ENCODE measurements at regions of chr7 and their contacts with region 1.

Region 1: GRCh38 chr7:123367484-123368122 is 166.8 kb downstream of the IQUB start:
- H3K4me3 ChIP-seq: no peak overlapping the region
- H3K27ac ChIP-seq: no peak overlapping the region
- H3K4me1 ChIP-seq: no peaks in the 10 kb centered on the region
- CTCF ChIP-seq: 0 out of 2 replicates have a peak, but pooled peaks have one; percentile 10

Region 2: DNA sequence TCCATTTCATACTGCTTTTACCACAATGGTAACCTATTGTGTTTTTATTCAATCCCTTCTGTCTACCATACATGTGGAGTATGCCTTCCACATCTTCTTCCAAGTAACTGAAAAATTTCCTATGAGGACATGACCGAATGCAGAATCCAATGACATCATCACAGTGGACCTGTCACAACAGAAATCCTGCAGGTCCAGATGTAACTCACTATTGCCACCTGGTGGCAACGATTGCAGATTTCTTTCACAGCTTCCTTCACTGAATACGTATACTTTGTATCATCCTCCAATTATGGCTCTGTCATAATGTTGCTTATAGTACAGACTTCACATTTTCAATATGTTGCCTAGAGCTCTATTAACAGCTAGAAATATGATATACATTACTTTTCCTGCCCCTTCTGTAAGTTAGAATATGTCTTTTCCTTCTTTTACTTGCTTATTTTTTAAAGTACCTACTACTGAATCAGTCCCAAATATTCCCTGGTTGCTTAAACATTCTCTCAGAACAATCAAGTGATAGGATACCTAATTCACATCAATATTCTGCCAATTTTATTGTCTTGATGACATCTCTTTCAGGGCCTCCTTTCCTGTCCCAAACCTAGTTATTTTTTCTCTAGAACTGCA is 213.3 kb before region 1 on chr7:
- CTCF ChIA-PET with region 1: interaction called, 13 read pairs
- POLR2A ChIA-PET with region 1: no interaction called
- H3K4me3 ChIP-seq: no peak overlapping the region
- H3K27ac ChIP-seq: no peak overlapping the region
- H3K4me1 ChIP-seq: no peaks in the 10 kb centered on the region
- CTCF ChIP-seq: peak; percentile 19; the same call in 1 of the 2 replicates

Region 3: DNA sequence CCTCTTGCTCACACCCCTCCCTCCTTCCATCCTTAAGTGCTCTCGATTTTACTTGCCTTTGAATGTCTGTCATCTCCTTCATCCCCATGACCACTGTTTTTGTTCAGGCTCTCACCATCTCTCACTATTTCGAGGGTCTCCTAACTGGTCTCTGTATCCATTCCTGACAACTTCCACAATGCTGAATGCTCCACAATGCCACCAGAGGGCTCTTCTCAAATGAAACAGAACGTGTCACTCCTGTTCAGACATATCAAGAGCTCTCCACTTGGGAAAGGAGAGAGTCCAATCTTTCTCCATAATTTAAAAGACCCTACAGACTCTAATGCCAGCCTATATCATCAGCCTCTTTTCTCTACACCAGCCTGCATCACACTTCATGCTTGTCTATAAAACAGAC is 158.8 kb before region 1 on chr7:
- CTCF ChIA-PET with region 1: interaction called, 45 read pairs
- POLR2A ChIA-PET with region 1: no interaction called
- H3K4me3 ChIP-seq: no peak overlapping the region
- H3K27ac ChIP-seq: no peak overlapping the region
- H3K4me1 ChIP-seq: no peaks in the 10 kb centered on the region
- CTCF ChIP-seq: peak; percentile 33; the same call in 1 of the 2 replicates

Region 4: DNA sequence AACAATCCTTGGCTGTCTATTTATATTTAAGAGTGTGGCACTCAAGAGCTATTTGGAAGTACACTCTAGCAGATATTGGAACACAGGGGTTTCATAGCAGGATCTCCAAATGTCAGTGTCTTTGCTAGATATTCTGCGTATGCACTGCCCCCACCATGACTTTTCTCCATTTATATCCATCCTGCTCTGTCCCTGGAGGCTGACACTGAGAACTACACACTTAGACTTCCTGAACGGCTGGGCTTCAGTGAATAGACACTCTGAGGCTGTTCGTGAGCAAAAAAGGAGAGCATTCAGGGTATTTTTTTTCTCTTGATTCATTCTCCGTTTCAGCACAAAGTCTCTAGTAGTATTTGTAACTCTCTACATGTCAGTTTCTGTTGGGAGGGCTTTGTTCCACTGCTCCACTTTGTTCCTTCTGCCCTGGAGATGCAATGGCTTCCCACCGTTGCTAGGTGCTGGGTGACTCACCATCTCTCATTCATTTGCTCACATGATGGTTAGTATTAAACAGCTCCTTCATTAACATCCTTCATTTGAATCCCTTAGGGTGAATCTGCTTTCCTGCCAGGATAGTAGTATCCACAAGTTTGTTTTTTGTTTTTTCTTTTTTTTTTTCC is 11.9 kb before region 1 on chr7:
- CTCF ChIA-PET with region 1: interaction called, 13 read pairs
- POLR2A ChIA-PET with region 1: no interaction called
- H3K4me3 ChIP-seq: peak overlapping the region; percentile 7; the same call in 1 of the 2 replicates
- H3K27ac ChIP-seq: no peak overlapping the region
- H3K4me1 ChIP-seq: no peaks in the 10 kb centered on the region
- CTCF ChIP-seq: no peak